A673 (cell line): ENCODE measurements at regions of chr2 and their contacts with region 1.

Region 1: GRCh38 chr2:41932241-41933030 is 115.4 kb upstream of the PKDCC start:
- DNase-seq: no peak
- H3K4me3 ChIP-seq: no peak overlapping the region
- H3K27ac ChIP-seq: no peak overlapping the region
- H3K4me1 ChIP-seq: peaks cover 46% of the 10 kb centered on the region
- H3K27me3 ChIP-seq: no peaks in the 10 kb centered on the region
- CTCF ChIP-seq: no peak

Region 2: GRCh38 chr2:41464395-41464794 is 468.0 kb before region 1 on chr2:
- CTCF ChIA-PET with region 1: no interaction called
- POLR2A ChIA-PET with region 1: no interaction called
- intact Hi-C with region 1: no loop called
- DNase-seq: no peak
- H3K4me3 ChIP-seq: no peak overlapping the region
- H3K27ac ChIP-seq: no peak overlapping the region
- H3K4me1 ChIP-seq: no peaks in the 10 kb centered on the region
- H3K27me3 ChIP-seq: no peaks in the 10 kb centered on the region
- CTCF ChIP-seq: no peak

Region 3: GRCh38 chr2:41955316-41956043 is 23.0 kb after region 1 on chr2:
- CTCF ChIA-PET with region 1: no interaction called
- POLR2A ChIA-PET with region 1: interaction called, 16 read pairs
- intact Hi-C with region 1: no loop called
- DNase-seq: no peak
- H3K4me3 ChIP-seq: no peak overlapping the region
- H3K27ac ChIP-seq: no peak overlapping the region
- H3K4me1 ChIP-seq: peaks cover 4% of the 10 kb centered on the region
- H3K27me3 ChIP-seq: no peaks in the 10 kb centered on the region
- CTCF ChIP-seq: no peak